HepG2 (cell line): ENCODE measurements at regions of chr5 and their contacts with region 1.

Region 1: DNA sequence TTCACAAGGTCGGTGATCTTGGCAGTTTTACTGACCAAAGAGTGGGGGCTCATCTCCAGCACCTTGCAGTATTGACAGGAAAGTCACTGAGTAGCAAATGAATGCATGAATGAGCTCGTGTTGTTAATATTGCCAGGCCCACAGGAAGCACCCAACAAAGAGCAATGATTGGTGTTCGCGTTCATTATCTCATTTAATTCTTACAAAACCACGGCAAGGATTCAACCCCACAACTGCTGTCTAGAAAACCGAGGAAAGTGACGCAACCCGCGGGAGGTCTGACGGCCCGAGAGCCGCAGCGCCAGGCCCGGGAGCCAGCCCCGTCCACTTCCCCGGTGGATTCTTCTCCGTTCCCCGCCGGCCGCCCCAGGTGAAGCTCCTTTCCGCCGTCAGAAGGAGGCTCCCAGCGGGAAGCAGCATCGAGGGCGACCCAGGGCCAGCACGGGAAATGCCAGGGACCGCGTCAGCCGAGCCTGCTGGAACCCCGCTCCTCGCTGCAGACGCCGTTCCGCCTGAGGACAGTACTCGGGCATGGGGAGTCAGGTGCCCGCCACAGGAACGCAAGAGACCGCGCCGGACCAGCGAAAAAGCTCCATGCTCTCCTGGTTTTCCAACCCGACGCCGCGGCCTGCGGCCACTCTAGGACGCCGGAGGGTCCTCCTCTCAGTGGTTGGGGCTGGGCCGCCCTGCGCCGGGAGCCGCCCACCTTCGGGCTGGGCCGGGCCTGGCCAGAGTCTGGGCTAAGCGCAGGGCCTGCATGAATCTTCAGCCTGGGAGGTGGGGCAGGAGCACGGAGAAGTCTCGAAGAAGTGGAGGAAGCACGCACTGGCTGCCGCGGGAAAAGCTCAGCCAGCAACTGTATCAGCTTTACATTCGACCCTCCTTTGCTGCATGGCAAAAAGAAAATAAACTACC is 19.8 kb upstream of the FER start:
- DNase-seq: peak; percentile 59
- ATAC-seq: peak; percentile 100
- H3K4me3 ChIP-seq: peak overlapping the region; percentile 71 to 90 (median 80)
- H3K27ac ChIP-seq: peak overlapping the region; percentile 47
- H3K4me1 ChIP-seq: peaks cover 21% of the 10 kb centered on the region
- H3K27me3 ChIP-seq: no peaks in the 10 kb centered on the region; a peak in 2 of 5 replicates
- CTCF ChIP-seq: peak; percentile 18; the same call in 1 of the 2 replicates
- EP300 ChIP-seq: peak in 1 of 2 experiments; percentile 15; a peak in 1 of 4 replicates
- POLR2A ChIP-seq: peak; percentile 76 to 87
- RAD21 ChIP-seq: no peak

Region 2: DNA sequence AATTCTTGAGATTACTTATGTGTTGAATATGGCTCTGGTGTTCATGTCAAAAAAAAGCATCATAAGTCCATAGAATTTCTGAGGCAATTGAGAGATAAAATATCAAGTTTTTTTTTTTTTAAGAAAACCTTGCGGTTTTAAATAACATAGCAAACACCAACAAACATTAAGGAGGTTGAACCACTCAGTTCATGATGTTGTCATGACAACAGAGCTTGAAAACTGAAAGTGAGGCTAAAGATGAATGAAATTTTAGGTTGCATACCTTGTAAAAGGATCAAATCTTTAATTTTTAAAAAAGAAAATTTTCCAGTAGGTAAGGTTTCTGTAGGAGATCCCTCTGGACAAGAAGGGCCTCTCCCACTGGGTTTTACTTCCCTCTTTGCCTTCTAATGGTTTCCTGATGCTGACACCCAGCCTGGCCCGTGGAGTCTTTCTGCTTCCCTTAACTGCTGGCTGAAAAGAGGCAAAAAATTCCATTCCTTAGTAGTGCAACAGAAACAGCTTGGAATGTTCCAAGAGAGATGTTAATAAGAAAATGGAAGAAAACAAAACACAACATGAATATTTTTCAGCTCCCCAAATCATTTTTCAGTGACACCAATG is 40.2 kb before region 1 on chr5:
- CTCF ChIA-PET with region 1: no interaction called
- POLR2A ChIA-PET with region 1: interaction called, 9 read pairs
- in situ Hi-C with region 1: no loop called
- intact Hi-C with region 1: loop called (anchors 5 kb)
- DNase-seq: no peak
- ATAC-seq: no peak
- H3K4me3 ChIP-seq: no peak overlapping the region
- H3K27ac ChIP-seq: no peak overlapping the region
- H3K4me1 ChIP-seq: peaks cover 14% of the 10 kb centered on the region
- H3K27me3 ChIP-seq: no peaks in the 10 kb centered on the region; a peak in 1 of 5 replicates
- CTCF ChIP-seq: no peak
- EP300 ChIP-seq: no peak
- POLR2A ChIP-seq: no peak
- RAD21 ChIP-seq: no peak

Region 3: DNA sequence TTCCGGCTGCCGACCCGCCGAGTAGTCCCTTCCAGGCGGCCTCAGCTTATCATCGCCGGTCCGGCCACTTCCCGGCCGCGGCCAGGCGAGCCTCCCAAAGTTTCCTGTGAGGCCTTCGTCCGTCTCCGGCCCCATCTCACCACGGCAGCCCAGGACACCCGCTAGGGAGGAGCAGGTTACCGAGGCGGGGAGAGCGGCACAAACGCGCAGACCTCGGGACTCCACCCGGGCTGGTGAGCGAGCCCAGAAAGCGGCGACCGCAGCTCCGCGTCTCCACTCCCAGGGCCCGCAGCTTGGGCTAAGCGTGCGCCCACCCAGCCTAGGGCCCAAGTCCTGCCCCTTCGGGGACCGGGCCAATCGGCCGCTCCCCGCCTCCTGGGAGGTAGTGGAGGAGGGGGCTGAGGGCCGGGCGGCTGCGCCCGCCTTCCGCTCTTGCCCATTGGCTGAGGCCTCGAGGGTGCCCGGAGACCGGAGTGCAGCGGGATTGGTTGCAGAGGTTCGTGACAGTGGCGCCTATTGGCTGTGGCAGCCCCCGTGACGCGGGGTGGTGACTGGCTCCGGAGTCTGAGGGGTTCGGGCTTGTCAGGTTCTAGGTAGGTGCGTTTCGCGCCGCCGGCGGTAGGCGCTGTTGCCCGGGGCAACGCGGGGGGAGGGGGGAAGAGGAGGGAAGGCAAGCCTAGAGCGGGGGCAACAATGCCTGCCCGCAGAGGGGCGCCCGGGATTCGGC is 20.7 kb after region 1 on chr5:
- CTCF ChIA-PET with region 1: no interaction called
- POLR2A ChIA-PET with region 1: interaction called, 46 read pairs
- in situ Hi-C with region 1: no loop called
- intact Hi-C with region 1: loop called (anchors 1 kb)
- DNase-seq: peak; percentile 96
- ATAC-seq: peak; percentile 98
- H3K4me3 ChIP-seq: peak overlapping the region; percentile 80 to 83 (median 80)
- H3K27ac ChIP-seq: peak overlapping the region; percentile 81
- H3K4me1 ChIP-seq: peaks cover 14% of the 10 kb centered on the region
- H3K27me3 ChIP-seq: peaks cover 0 to 4% of the 10 kb centered on the region in 2 experiments; a peak in 1 of 5 replicates
- CTCF ChIP-seq: peak; percentile 69
- EP300 ChIP-seq: no peak
- POLR2A ChIP-seq: peak; percentile 96 to 99
- RAD21 ChIP-seq: peak; percentile 50; the same call in 1 of the 2 replicates